ENCODE measurements at regions of chr7 and their contacts with region 1.

Region 1: DNA sequence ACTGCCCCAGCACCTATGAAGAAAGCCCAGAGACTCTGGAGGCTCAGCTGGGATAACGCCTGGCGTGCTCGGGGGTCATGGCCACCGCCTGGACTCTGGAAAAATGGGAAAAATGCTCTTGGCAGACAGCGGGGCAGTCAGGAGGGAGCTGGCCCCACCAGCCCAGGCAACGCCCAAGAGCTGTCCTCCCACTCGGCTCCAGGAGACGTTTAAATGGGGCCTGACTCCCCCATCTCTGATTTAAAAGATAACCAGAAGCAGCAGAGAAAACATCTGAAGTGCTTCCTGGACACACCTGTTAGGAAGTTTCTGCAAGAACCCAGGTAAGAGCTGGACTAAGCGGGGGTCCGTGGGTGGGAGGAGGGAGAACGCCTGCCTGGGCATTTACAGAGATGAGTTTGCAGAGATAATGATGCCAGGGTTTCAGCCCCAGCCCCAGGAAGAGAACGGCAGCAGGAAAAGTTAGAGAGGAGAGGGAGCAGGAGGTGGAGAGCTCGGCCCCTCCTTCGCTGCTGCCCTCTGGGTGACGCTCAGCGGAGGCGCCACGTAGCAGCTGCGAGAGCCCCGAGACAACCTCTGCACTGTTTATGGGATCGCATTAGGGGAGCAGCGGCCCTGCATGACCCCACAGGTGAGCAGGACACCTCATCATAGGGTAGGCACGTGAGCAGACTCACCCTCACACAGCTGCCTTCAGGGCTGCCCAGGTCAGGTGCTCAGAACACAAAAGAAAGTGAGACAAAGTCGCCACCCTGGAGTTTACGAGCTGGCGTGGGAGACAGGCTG is 83.5 kb upstream of the INSIG1 start:
- DNase-seq: no peak
- ATAC-seq: no peak
- H3K4me3 ChIP-seq: no peak overlapping the region
- H3K4me3 Mint-ChIP-seq: no peak overlapping the region
- H3K27ac ChIP-seq: no peak overlapping the region
- H3K27ac Mint-ChIP-seq: no peak overlapping the region
- H3K4me1 ChIP-seq: no peaks in the 10 kb centered on the region
- H3K4me1 Mint-ChIP-seq: no peaks in the 10 kb centered on the region
- H3K27me3 ChIP-seq: peaks cover 0 to 39% of the 10 kb centered on the region in 2 experiments
- H3K27me3 Mint-ChIP-seq: peaks cover 7% of the 10 kb centered on the region in 2 donors

Region 2: GRCh38 chr7:155182406-155182970 is 31.7 kb before region 1 on chr7:
- CTCF ChIA-PET with region 1: interaction called in 1 of 2 experiments, 13 read pairs
- POLR2A ChIA-PET with region 1: no interaction called
- DNase-seq: no peak
- ATAC-seq: no peak
- H3K4me3 ChIP-seq: no peak overlapping the region
- H3K4me3 Mint-ChIP-seq: no peak overlapping the region
- H3K27ac ChIP-seq: no peak overlapping the region
- H3K27ac Mint-ChIP-seq: no peak overlapping the region
- H3K4me1 ChIP-seq: no peaks in the 10 kb centered on the region
- H3K4me1 Mint-ChIP-seq: no peaks in the 10 kb centered on the region
- H3K27me3 ChIP-seq: peaks cover 0 to 5% of the 10 kb centered on the region in 2 experiments
- H3K27me3 Mint-ChIP-seq: peaks cover 2 to 6% of the 10 kb centered on the region in 2 donors

Region 3: GRCh38 chr7:155198901-155199845 is 15.0 kb before region 1 on chr7:
- CTCF ChIA-PET with region 1: no interaction called
- POLR2A ChIA-PET with region 1: no interaction called
- DNase-seq: no peak
- ATAC-seq: no peak
- H3K4me3 ChIP-seq: no peak overlapping the region
- H3K4me3 Mint-ChIP-seq: no peak overlapping the region
- H3K27ac ChIP-seq: no peak overlapping the region
- H3K27ac Mint-ChIP-seq: no peak overlapping the region
- H3K4me1 ChIP-seq: no peaks in the 10 kb centered on the region
- H3K4me1 Mint-ChIP-seq: peaks cover 0 to 6% (median 2%) of the 10 kb centered on the region in 3 donors
- H3K27me3 ChIP-seq: peaks cover 0 to 9% of the 10 kb centered on the region in 2 experiments
- H3K27me3 Mint-ChIP-seq: peaks cover 3% of the 10 kb centered on the region in 2 donors

Measured in T-cell (primary cell).